Esophagus muscularis mucosa (tissue), 4 donors: ENCODE measurements at regions of chr12 and their contacts with region 1.

Region 1: DNA sequence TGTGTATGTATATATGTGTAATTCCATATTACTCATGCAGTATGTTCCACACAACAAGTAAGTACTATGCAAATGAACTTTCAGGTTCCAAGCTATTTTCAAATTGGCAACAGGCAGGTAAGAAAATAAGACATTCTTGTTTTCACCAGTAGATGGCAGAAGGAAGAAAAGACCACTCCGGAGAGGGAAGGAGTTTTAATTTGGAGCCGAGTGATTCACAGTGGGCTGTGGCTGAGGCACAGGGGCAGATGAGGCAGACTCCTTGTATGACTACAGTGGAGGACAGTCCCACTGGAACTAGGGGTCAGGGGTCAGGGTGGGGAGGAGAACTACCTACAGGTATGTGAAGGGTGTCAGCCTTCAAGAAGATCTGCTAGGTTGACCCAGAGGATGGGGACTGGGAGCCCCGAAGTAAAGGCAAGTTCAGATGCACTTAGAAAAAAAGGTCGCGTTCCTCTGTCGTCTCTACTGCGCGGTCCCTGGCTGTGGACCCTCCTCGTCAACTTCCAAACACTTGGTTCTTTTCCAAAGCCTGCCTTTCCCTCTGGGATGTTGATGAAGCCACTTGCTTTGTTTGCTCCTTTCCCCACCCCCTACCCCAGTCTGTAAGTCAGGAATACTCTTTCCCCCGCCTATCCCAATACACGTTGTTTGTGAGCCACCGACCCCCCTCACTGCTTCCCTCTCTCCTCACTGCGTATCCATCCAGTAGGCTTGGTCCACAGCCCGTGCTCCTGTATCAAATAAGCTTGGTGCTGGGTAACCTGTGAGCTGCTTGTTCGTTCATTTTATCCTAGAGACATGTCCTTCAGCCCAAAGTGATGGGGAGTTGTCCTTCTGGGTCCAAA is 24.1 kb downstream of the DDX47 start:
- DNase-seq: no peak
- H3K4me3 ChIP-seq: no peak overlapping the region
- H3K27ac ChIP-seq: no peak overlapping the region
- H3K4me1 ChIP-seq: peaks cover 0 to 6% (median 0%) of the 10 kb centered on the region in 4 donors
- H3K27me3 ChIP-seq: no peaks in the 10 kb centered on the region
- CTCF ChIP-seq: peak; percentile 41 to 53 (median 45)
- EP300 ChIP-seq: no peak
- POLR2A ChIP-seq: no peak

Region 2: GRCh38 chr12:12859690-12860089 is 22.4 kb after region 1 on chr12:
- intact Hi-C with region 1: no loop called
- DNase-seq: no peak
- H3K4me3 ChIP-seq: no peak overlapping the region
- H3K27ac ChIP-seq: no peak overlapping the region
- H3K4me1 ChIP-seq: no peaks in the 10 kb centered on the region
- H3K27me3 ChIP-seq: no peaks in the 10 kb centered on the region
- CTCF ChIP-seq: no peak
- EP300 ChIP-seq: no peak
- POLR2A ChIP-seq: no peak

Region 3: DNA sequence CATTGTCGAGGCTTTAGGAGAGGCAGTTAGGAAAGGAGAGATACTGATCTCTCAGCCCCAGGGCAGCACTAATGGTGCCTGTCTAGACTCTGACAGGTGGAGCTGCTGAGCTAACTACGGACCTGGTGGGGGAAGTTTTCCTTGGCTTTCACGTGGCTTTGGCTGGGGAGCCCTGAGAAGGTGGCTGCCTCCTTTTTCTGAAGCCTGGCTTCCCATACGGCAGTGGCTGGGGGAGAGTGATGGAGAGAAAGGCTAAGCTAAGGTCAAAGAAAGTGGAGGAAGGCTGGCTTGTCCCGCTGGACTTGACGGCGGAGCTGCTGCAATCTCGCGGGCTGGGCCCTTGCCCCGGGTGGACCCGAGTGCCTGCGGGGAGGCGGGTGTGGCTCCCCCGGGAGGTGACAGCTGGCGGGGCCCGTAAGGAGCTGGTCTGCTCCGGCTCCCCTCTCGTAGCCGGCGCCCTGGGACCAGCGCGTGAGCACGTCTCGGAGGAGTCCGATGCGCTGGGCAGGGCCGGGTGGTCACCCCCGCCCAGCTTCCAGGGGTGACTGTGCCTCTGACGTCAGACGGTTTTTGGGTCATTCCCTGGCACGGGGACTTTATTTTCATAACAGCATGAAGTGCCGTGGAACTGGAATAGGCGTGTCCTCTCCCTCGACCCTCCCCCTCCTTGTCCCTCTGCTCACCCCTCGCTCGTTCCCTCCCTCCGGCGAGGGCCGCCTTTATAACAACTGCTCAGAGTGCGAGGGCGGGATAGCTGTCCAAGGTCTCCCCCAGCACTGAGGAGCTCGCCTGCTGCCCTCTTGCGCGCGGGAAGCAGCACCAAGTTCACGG is 53.8 kb after region 1 on chr12 and contains the start of gene GPRC5A:
- intact Hi-C with region 1: loop called (anchors 5 kb)
- DNase-seq: peak; percentile 95
- H3K4me3 ChIP-seq: peak within 1 kb of the TSS; percentile 60 to 66 (median 64)
- H3K27ac ChIP-seq: peak within 1 kb of the TSS; percentile 77 to 81 (median 80)
- H3K4me1 ChIP-seq: peaks cover 8 to 28% (median 20%) of the 10 kb centered on the region in 4 donors
- H3K27me3 ChIP-seq: no peaks in the 10 kb centered on the region
- CTCF ChIP-seq: peak in 2 of 3 experiments; percentile 12 to 16
- EP300 ChIP-seq: no peak
- POLR2A ChIP-seq: peak; percentile 37
- total RNA-seq, gene GPRC5A: 2.9 to 30.0 (median 3.8) TPM

Region 4: GRCh38 chr12:12975322-12976077 is 138.3 kb after region 1 on chr12:
- intact Hi-C with region 1: loop called (anchors 5 kb)
- DNase-seq: no peak
- H3K4me3 ChIP-seq: no peak overlapping the region
- H3K27ac ChIP-seq: peak overlapping the region; percentile 36 to 71 (median 48)
- H3K4me1 ChIP-seq: peaks cover 20 to 36% (median 24%) of the 10 kb centered on the region in 4 donors
- H3K27me3 ChIP-seq: no peaks in the 10 kb centered on the region
- CTCF ChIP-seq: peak in 2 of 3 experiments; percentile 10 to 26
- EP300 ChIP-seq: no peak
- POLR2A ChIP-seq: no peak